Endothelial cell of umbilical vein (primary cell): ENCODE measurements at regions of chr14 and their contacts with region 1.

Region 1: GRCh38 chr14:51780006-51780692 is 80.3 kb upstream of the GNG2 start:
- DNase-seq: peak; percentile 67
- H3K4me3 ChIP-seq: no peak overlapping the region
- H3K27ac ChIP-seq: no peak overlapping the region
- H3K4me1 ChIP-seq: peaks cover 3% of the 10 kb centered on the region
- H3K27me3 ChIP-seq: peaks cover 18 to 38% of the 10 kb centered on the region in 2 experiments
- CTCF ChIP-seq: peak; percentile 66 to 78
- POLR2A ChIP-seq: no peak

Region 2: GRCh38 chr14:51293149-51293911 is 486.8 kb before region 1 on chr14:
- CTCF ChIA-PET with region 1: interaction called, 16 read pairs
- POLR2A ChIA-PET with region 1: no interaction called
- dilution Hi-C with region 1: no loop called
- intact Hi-C with region 1: no loop called
- DNase-seq: peak; percentile 16
- H3K4me3 ChIP-seq: no peak overlapping the region
- H3K27ac ChIP-seq: no peak overlapping the region
- H3K4me1 ChIP-seq: no peaks in the 10 kb centered on the region
- H3K27me3 ChIP-seq: no peaks in the 10 kb centered on the region
- CTCF ChIP-seq: no peak
- POLR2A ChIP-seq: no peak

Region 3: DNA sequence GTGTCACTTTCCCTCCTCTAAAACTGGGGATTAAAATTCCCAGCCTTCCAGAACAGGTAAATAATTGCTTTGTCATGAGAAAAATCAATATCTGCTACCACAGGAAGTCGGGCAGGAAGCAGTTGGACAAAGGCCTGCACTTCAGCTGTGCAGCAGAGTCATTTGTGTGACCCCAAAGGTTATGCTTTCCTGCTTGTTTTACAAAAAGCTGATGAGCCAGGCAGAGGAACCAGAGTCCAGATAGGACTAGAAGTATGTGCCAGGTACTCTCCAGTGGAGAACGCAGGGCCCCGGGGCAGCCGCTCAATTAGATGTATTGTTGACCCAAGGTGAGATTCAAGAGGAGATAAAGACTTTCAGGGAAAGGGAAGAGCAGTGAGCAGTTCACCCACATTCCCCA is 245.5 kb before region 1 on chr14:
- CTCF ChIA-PET with region 1: no interaction called
- POLR2A ChIA-PET with region 1: no interaction called
- dilution Hi-C with region 1: no loop called
- intact Hi-C with region 1: no loop called
- DNase-seq: peak; percentile 86
- H3K4me3 ChIP-seq: no peak overlapping the region
- H3K27ac ChIP-seq: peak overlapping the region; percentile 78
- H3K4me1 ChIP-seq: peaks cover 36% of the 10 kb centered on the region
- H3K27me3 ChIP-seq: no peaks in the 10 kb centered on the region
- CTCF ChIP-seq: no peak
- POLR2A ChIP-seq: no peak

Region 4: GRCh38 chr14:52078095-52078531 is 298.0 kb after region 1 on chr14:
- CTCF ChIA-PET with region 1: no interaction called
- POLR2A ChIA-PET with region 1: no interaction called
- dilution Hi-C with region 1: no loop called
- intact Hi-C with region 1: no loop called
- DNase-seq: peak; percentile 13
- H3K4me3 ChIP-seq: no peak overlapping the region
- H3K27ac ChIP-seq: peak overlapping the region; percentile 65
- H3K4me1 ChIP-seq: peaks cover 57% of the 10 kb centered on the region
- H3K27me3 ChIP-seq: no peaks in the 10 kb centered on the region
- CTCF ChIP-seq: no peak
- POLR2A ChIP-seq: no peak